GM18951 (cell line): ENCODE measurements at regions of chr1 and their contacts with region 1.

Region 1: GRCh38 chr1:234842726-234843641 is 233.0 kb upstream of the IRF2BP2 start:
- POLR2A ChIP-seq: peak; percentile 47

Region 2: GRCh38 chr1:234645474-234645953 is 197.5 kb before region 1 on chr1:
- in situ Hi-C with region 1: no loop called
- POLR2A ChIP-seq: no peak

Region 3: GRCh38 chr1:234743791-234744611 is 99.0 kb before region 1 on chr1:
- in situ Hi-C with region 1: no loop called
- POLR2A ChIP-seq: no peak

Region 4: GRCh38 chr1:234772345-234773147 is 70.4 kb before region 1 on chr1:
- in situ Hi-C with region 1: loop called (anchors 10 kb)
- POLR2A ChIP-seq: peak; percentile 46

Region 5: GRCh38 chr1:235045034-235045720 is 202.2 kb after region 1 on chr1:
- in situ Hi-C with region 1: no loop called
- POLR2A ChIP-seq: no peak

Region 6: GRCh38 chr1:236457775-236458174 is 1614.8 kb after region 1 on chr1:
- in situ Hi-C with region 1: no loop called
- POLR2A ChIP-seq: no peak